ENCODE measurements at regions of chr12 and their contacts with region 1.

Region 1: DNA sequence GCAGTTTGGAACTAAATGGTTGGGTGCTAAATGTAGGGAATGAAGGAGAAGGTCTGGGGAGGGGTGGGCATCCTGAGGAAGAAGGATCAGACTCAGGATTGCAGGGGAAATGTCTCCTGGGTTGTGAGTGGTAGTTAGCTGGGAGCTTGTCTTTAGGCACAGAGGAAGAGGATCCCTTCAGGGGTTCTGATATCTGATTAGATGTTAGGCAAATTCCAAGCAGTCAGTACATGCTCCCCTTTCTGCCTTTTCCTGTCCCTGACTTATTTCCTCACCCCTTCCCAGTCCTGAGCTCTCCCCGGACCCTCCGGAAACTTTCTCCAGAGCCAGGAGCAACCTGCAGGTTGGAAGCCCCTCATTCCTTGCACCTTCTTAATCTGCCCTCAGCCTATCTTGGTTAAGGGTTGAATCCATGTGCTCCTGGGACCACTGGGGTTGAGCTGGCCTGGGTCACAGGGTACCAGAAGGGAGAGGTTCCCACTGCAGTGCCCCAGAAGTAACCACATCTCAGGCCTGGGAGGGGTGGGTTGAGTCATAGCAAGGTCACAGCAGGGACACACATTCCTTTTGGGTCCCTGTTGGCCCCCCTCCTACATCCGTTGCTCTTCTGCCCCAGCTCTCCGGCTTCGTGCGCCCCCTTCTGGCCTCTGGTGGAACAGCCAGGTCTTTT is 1.6 kb downstream of the IGFBP6 start:
- DNase-seq: peak; percentile 68 to 87
- ATAC-seq: peak; percentile 74 to 76
- H3K4me3 ChIP-seq: peak overlapping the region; percentile 0 to 71 (median 47)
- H3K27ac ChIP-seq: peak overlapping the region; percentile 69 to 81 (median 79)
- H3K4me1 ChIP-seq: peaks cover 12 to 21% of the 10 kb centered on the region in 2 donors
- H3K27me3 ChIP-seq: no peaks in the 10 kb centered on the region
- CTCF ChIP-seq: peak; percentile 90 to 99 (median 93)
- POLR2A ChIP-seq: no peak

Region 2: DNA sequence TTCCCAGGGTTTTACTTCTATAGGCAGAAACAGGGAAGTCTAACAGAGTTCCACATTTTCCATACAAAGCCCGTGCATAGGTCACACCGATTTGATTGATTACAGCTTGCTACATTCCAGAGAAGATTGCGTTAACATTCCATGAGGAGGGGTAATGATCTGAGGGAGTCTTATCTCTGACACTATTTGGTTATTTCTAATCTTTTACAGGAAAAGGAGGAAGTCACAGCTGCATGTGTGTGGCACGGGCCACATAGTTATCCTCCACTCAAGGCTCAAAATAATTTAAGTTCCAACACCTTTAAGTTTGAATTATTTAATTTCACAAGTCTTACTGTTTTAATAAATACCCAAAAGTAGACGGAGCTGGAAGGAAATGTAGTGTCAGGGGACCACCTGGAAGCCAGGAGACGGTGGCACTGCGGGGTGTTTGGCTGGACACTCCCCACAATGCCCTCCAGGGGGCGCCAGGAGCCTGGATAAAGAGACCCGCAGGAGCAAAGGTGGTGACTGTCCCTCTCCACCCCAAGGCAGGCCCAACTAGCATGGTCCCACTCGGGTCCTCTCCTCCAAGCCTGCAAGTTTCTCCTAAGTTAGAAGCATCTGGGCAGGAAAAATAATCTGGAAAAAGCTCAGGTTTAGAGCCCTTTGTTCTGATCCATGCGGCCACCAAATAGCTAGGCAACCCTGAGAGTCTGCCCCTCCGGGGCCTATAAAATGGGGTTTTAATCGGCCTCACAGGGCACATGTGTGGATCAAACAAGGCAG is 214.4 kb before region 1 on chr12:
- in situ Hi-C with region 1: loop called in 1 of 4 experiments (anchors 25 kb)
- intact Hi-C with region 1: loop called (anchors 5 kb)
- DNase-seq: peak; percentile 31 to 37
- ATAC-seq: peak in 1 of 2 donors; percentile 63
- H3K4me3 ChIP-seq: no peak overlapping the region
- H3K27ac ChIP-seq: no peak overlapping the region
- H3K4me1 ChIP-seq: peaks cover 0 to 2% of the 10 kb centered on the region in 2 donors
- H3K27me3 ChIP-seq: peaks cover 0 to 4% (median 3%) of the 10 kb centered on the region in 3 donors
- CTCF ChIP-seq: peak; percentile 68 to 87 (median 81)
- POLR2A ChIP-seq: no peak

Region 3: GRCh38 chr12:53079226-53080117 is 19.6 kb before region 1 on chr12 and contains the start of gene SPRYD3:
- in situ Hi-C with region 1: no loop called
- intact Hi-C with region 1: loop called (anchors 2 kb)
- DNase-seq: peak; percentile 97 to 98
- ATAC-seq: peak; percentile 97
- H3K4me3 ChIP-seq: peak within 1 kb of the TSS; percentile 70 to 84 (median 77)
- H3K27ac ChIP-seq: peak within 1 kb of the TSS; percentile 86 to 93 (median 88)
- H3K4me1 ChIP-seq: peaks cover 9 to 17% of the 10 kb centered on the region in 2 donors
- H3K27me3 ChIP-seq: no peaks in the 10 kb centered on the region
- CTCF ChIP-seq: no peak
- POLR2A ChIP-seq: peak; percentile 74 to 78
- total RNA-seq, gene SPRYD3: 15.9 to 29.5 (median 25.5) TPM

Measured in gastrocnemius medialis (tissue), 4 donors.